ENCODE measurements at regions of chr4 and their contacts with region 1.

Region 1: DNA sequence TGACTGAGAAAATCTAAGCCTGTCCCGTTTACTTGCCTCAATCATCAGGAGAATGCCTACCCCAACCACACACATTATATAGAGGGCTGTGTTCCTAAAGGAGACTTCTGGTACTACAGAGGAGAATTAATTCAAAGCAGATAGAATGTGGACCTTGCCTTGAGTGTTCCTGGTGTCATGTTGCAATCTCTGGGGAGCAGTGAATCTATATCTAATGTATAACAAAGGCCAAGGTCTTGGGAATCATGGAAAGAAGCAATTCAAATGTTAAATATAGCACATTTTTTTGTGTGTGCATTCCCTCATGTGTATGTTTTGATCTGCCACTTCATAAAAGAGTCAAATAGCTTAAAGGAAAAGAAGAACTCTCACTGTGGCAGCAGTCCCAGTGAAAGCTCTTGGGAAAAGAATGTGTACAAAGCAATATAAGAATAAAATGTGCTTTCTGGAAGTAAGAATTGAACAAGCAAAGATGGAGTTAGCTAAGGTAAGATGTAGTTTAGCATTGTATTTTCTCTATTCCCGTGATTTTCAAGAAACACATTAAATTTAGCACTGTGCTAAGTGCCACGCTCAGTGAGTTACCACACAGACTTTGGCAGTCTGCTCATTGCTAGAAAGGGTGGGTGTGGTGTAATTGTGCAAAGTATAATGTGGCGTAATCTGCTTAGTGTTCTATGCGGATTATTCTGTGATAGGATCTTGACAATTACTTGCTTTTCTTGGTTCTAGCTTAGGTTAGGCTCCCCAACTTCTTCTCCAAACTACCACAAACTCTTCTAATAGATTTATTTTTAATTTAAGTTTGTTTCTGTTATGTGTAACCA is 13.7 kb downstream of the ADH6 start:
- DNase-seq: peak in 1 of 2 donors; percentile 77
- H3K4me3 ChIP-seq: no peak overlapping the region
- H3K27ac ChIP-seq: peak overlapping the region; percentile 75 to 85
- H3K4me1 ChIP-seq: peaks cover 9 to 40% of the 10 kb centered on the region in 2 donors
- H3K27me3 ChIP-seq: no peaks in the 10 kb centered on the region
- CTCF ChIP-seq: no peak

Region 2: DNA sequence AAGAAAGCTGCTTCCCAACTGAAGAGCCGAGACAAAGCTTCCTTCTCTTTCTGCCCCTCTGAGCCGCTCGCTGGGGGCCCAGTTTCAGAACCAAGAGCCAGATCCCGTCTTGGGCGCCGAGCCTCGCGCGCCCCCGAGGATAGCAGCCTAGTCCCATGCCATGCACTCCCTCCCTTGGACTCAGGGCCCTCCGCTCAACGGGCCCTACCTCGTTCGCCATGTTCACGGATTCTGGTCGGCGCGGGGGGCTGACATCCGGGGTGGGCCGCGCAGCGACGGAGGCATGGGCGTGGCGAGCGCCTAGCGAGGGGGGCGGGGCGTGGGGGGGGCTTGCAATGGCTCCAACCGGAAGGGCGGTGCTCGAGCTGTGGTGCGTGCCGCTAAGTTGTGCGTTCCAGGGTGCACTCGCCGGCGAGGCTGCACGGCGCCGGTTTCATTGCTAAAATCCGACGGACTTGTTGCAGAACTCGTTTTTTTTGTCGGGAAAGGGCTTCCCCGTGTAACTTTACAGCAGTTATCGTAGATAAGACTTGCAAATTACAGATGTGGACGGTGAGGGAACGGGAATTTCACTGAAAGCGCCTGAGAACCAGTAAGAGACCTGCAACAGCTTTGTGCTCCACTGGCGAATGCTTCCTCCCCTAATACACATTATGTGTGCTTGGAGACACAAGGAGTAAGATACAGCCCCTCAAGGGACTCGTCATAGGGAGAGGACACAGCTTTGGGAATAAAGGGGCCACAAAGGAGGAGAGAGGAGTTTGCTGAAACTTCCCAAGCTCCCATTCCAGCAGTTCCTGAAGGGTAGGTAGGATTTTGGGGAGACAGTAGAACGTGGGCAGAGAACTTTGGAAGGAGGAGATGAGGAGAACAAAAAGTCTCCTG is 116.6 kb before region 1 on chr4 and contains the start of gene ADH5:
- intact Hi-C with region 1: loop called (anchors 2 kb)
- DNase-seq: peak; percentile 46 to 92
- H3K4me3 ChIP-seq: peak within 1 kb of the TSS; percentile 87 to 95
- H3K27ac ChIP-seq: peak within 1 kb of the TSS; percentile 97 to 98
- H3K4me1 ChIP-seq: peaks cover 0 to 15% of the 10 kb centered on the region in 2 donors
- H3K27me3 ChIP-seq: no peaks in the 10 kb centered on the region
- CTCF ChIP-seq: no peak
- total RNA-seq, gene ADH5: 93.4 TPM

Region 3: DNA sequence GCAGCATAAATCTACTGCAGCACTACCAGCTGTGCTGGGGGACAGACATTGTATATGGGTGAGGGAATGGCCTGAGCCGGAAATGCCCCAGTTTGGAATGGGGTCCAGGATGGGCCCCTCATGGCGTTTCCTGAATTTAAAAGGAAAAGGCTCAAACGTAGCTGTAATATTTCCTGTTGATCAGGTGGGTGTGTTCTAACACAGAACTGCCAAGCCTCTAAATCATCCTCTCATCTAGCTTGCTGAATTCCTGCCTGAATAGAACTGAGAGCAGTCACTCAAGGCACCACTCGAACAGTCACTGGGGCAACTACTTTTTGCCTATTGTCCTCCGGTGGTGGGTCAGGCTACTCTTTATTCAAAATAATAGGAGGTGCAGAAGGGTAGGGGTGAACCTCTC is 15.0 kb before region 1 on chr4:
- intact Hi-C with region 1: no loop called
- DNase-seq: no peak
- H3K4me3 ChIP-seq: no peak overlapping the region
- H3K27ac ChIP-seq: no peak overlapping the region
- H3K4me1 ChIP-seq: no peaks in the 10 kb centered on the region
- H3K27me3 ChIP-seq: no peaks in the 10 kb centered on the region
- CTCF ChIP-seq: no peak

Region 4: DNA sequence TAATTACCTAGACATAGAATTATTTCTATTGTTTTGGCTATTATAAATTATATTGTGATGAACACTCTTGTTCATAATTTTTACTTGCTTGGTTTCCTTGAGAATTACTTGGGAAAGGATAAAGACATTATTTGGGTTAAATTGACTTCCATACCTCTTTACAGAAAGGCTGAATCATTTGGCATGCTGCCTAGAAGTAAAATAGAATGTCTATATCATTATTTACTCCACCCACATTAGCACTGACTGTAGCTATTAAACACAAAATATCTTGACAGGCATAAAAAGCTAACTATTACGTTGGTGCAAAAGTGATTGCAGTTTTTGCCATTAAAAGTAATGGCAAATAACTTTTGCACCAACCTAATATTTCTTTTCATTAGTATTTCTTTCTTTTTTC is 43.3 kb after region 1 on chr4:
- intact Hi-C with region 1: loop called (anchors 5 kb)
- DNase-seq: no peak
- H3K4me3 ChIP-seq: no peak overlapping the region
- H3K27ac ChIP-seq: peak overlapping the region; percentile 79 to 82
- H3K4me1 ChIP-seq: peaks cover 0 to 8% of the 10 kb centered on the region in 2 donors
- H3K27me3 ChIP-seq: no peaks in the 10 kb centered on the region
- CTCF ChIP-seq: no peak